ENCODE measurements at regions of chr7 and their contacts with region 1.

Region 1: DNA sequence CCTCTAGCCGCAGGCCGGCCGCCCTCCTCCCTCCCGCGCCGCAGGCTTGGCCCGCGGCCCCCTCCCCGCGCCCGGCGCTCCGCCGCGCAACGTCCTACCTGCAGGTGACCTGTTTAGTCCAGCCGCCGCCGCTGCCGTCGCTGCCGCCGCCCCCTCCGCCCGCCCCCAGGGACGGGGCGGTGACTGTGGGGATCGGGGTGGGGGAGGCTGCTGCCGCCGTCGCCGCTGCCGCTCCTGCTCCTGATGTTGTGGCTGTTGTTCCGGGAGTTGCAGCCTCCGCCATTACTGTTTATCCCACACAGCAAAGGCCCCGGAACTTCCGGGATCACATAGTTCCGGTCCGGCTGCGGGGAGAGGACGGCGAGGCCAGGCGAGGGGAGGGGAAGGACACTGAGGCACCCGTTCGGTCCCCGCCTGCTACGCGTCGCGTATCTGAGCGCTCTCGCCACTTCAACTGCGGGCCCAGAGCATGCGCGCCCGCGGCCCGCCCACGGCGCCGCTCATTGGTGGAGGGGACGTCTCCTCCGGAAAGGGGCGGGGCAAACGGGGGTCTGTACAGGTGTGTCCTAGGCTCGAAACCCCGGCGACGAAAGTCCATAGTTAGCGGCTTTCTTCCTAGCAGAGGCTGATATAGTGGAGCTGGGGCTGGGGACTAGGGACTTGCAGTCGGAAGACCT is at the start of gene MKRN1:
- DNase-seq: peak; percentile 90
- H3K4me3 Mint-ChIP-seq: peak within 1 kb of the TSS; percentile 99
- H3K27ac Mint-ChIP-seq: peak within 1 kb of the TSS; percentile 99
- H3K4me1 Mint-ChIP-seq: peaks cover 29% of the 10 kb centered on the region
- H3K27me3 Mint-ChIP-seq: peaks cover 8% of the 10 kb centered on the region
- total RNA-seq, gene MKRN1: 61.7 and 72.2 TPM in 2 replicates

Region 2: GRCh38 chr7:140062528-140063299 is 416.5 kb before region 1 on chr7 and contains the start of gene PARP12:
- intact Hi-C with region 1: loop called (anchors 5 kb)
- DNase-seq: peak; percentile 88
- H3K4me3 Mint-ChIP-seq: peak within 1 kb of the TSS; percentile 82
- H3K27ac Mint-ChIP-seq: peak within 1 kb of the TSS; percentile 91
- H3K4me1 Mint-ChIP-seq: peaks cover 43% of the 10 kb centered on the region
- H3K27me3 Mint-ChIP-seq: peaks cover 5% of the 10 kb centered on the region
- total RNA-seq, gene PARP12: 62.0 and 63.7 TPM in 2 replicates

Region 3: DNA sequence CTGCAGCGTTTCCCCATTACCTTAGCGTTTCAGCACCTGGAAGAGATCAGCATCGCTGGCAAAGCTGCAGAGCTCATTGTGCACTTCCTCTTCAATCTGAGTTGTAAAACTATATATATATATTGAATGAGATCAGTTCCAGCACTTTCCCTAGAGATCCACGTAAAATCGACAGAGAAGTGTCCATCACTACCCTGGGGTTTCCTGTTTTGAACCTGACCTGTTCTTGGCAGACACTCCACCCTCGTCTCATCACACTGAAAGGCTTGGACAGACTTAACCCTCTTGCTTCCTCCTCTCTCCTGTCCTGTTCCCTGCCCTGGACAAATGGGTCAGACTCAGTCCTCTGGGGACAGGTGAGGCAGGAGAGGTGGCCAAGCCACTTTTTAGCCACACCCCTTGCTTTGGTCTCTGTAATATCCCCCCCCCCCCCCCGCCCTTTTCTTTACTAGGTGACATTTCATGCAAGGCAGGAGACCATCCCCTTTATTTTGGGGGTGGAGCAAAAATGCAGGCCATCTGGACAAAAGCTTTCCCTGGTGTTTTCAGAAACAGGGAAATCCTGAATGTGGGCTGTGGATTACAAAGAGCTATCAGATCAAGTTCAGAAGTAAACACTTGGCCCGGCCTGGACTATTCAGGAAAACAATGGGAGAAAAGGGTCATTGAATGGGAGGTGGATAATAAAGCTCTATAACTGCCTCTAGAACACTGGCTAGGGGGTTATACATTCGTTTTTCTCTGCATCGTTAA is 218.7 kb before region 1 on chr7:
- intact Hi-C with region 1: loop called (anchors 2 kb)
- DNase-seq: no peak
- H3K4me3 Mint-ChIP-seq: no peak overlapping the region
- H3K27ac Mint-ChIP-seq: no peak overlapping the region
- H3K4me1 Mint-ChIP-seq: peaks cover 42% of the 10 kb centered on the region
- H3K27me3 Mint-ChIP-seq: no peaks in the 10 kb centered on the region

Region 4: DNA sequence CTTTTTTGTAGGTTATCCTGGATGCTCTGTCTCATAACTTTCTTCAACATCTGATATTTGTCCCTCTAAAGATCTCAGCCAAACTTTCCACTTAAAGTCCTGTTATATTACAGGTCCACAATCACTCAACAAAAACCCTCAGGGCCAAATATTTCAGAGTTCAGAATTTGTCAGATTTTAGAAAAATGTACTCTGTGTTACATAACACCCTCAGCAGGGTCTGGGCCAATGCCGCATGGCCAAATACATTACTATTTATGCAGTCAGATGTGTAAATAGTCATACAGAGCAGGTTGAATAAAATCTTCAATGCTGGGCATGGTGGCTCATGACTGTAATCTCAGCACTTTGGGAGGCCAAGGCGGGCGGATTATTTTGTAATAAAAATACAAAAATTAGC is 63.8 kb before region 1 on chr7:
- intact Hi-C with region 1: no loop called
- DNase-seq: no peak
- H3K4me3 Mint-ChIP-seq: no peak overlapping the region
- H3K27ac Mint-ChIP-seq: no peak overlapping the region
- H3K4me1 Mint-ChIP-seq: peaks cover 18% of the 10 kb centered on the region
- H3K27me3 Mint-ChIP-seq: no peaks in the 10 kb centered on the region

Region 5: DNA sequence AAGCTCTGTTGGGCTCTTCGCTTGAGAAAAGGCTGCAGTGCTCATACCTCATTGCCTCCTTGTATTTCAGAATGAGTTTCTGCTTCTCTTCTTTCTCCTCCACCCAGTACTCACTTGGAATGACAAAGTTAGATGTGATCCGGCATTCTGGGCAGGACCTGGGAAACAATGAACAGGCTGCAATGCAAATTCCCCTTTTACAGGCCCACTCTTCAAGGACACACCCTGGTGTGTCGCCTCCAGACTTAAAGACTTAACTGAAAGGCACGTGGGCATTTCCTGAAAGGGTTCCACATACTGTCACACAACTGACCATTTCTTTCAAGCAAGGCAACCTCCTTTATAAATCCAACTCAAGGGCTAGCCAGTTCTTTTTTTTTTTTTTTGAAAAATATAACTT is 23.5 kb before region 1 on chr7:
- intact Hi-C with region 1: loop called (anchors 2 kb)
- DNase-seq: no peak
- H3K4me3 Mint-ChIP-seq: no peak overlapping the region
- H3K27ac Mint-ChIP-seq: no peak overlapping the region
- H3K4me1 Mint-ChIP-seq: peaks cover 43% of the 10 kb centered on the region
- H3K27me3 Mint-ChIP-seq: no peaks in the 10 kb centered on the region

Region 6: GRCh38 chr7:140696680-140697446 is 217.7 kb after region 1 on chr7 and contains the start of gene NDUFB2:
- intact Hi-C with region 1: loop called (anchors 1 kb)
- DNase-seq: peak; percentile 85
- H3K4me3 Mint-ChIP-seq: peak within 1 kb of the TSS; percentile 90
- H3K27ac Mint-ChIP-seq: peak within 1 kb of the TSS; percentile 96
- H3K4me1 Mint-ChIP-seq: peaks cover 30% of the 10 kb centered on the region
- H3K27me3 Mint-ChIP-seq: no peaks in the 10 kb centered on the region
- total RNA-seq, gene NDUFB2: 178 and 194 TPM in 2 replicates

Region 7: DNA sequence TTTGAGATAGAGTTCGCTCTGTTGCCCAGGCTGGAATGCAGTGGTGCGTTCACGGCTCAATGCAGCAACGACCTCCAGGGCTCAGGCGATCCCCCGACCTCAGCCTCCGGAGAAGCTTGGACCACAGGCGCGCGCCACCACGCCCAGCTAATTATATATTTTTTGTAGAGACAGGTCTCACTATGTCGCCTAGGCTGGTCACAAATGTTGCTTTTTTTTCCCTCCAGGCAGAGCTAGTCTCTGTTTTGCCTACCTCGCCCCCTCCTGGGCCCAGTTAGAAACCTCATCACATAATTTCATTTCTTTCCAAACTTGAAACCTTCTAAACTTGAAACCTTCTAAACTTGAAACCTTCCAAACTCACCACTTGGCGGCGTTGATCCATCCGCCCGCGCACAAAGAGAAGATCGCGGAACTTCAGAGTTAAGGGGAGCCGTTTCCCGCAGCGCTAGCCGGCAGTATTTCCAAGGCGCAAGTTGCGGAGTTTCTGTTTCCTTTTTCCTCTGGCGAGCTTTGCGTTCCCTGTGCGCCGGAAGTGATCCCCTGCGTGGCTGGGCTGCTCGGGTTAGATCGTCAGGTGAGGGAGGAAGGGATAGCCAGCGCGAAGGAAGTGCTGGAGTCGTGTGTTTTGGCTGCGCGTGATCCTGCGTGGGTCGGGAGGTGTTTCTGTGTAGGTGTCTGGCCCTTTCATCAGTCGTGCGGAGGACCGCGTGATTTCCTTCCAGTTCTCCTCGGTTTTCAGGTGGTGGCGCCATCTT is 1258.8 kb after region 1 on chr7 and contains the start of gene SSBP1:
- intact Hi-C with region 1: loop called (anchors 1 kb)
- DNase-seq: peak; percentile 91
- H3K4me3 Mint-ChIP-seq: peak within 1 kb of the TSS; percentile 94
- H3K27ac Mint-ChIP-seq: peak within 1 kb of the TSS; percentile 96
- H3K4me1 Mint-ChIP-seq: peaks cover 24% of the 10 kb centered on the region
- H3K27me3 Mint-ChIP-seq: no peaks in the 10 kb centered on the region
- total RNA-seq, gene SSBP1: 240 and 245 TPM in 2 replicates

Measured in activated T-helper 1 cell treated with anti-CD3 and anti-CD28 coated beads, Interleukin-12 subunit alpha, Interleukin-12 subunit beta, Interleukin-2, Interleukin-4 antibody, amounts not matched to agents 30 ng/mL and 10 ng/mL and 1 ng/mL, durations not matched to agents 14 hours and 24 hours and 36 hours (primary cell).